ENCODE measurements at regions of chr22 and their contacts with region 1.

Region 1: GRCh38 chr22:42169055-42169469 is 38.5 kb upstream of the CYP2D6 start:
- DNase-seq: peak; percentile 49
- H3K4me3 Mint-ChIP-seq: no peak overlapping the region
- H3K27ac Mint-ChIP-seq: no peak overlapping the region
- H3K4me1 Mint-ChIP-seq: peaks cover 2% of the 10 kb centered on the region
- H3K27me3 Mint-ChIP-seq: no peaks in the 10 kb centered on the region

Region 2: DNA sequence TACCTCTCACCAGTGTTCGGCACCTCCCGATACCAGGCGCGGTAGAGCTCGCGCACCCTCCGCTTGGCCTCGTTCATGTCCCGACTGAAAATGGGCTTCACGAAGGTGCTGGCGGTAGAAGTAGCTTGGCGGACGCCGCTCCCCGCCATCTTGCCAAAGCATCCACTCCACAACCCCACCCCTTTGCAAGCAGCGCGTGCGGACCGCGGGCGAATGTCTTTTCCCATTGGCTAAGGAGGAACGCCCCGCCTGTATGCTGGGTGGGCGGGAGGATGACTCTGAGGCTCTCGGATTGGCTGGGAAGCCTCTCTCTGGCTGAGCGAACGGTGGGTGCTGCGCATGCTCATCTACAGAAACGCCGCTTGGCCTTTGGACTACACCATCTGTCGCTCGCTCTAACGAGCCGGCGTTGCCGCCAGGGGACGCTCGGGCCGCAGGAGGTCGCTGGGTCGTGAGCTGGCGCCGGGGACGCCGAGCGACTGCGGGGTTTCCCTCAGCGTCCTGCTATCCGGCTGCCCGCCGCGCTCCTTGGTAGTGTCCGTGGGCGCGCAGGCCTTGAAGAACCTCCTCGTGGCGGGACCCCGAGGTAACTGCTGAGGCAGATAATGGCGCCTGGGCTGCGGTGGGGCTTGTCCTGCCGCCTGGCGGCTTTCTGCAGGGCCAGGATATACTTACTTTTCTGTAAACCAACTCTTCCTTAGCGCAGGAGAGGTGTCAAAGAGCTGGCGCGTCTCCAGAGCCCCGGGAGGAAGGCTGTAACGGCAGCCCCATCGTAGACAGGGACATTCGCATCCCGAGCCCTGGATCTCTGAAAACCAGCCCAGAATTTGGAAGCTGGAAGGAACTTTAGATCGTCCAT is 78.2 kb before region 1 on chr22 and contains the start of gene NDUFA6:
- intact Hi-C with region 1: no loop called
- DNase-seq: peak; percentile 99
- H3K4me3 Mint-ChIP-seq: peak within 1 kb of the TSS; percentile 98
- H3K27ac Mint-ChIP-seq: peak within 1 kb of the TSS; percentile 100
- H3K4me1 Mint-ChIP-seq: peaks cover 22% of the 10 kb centered on the region
- H3K27me3 Mint-ChIP-seq: no peaks in the 10 kb centered on the region
- total RNA-seq, gene NDUFA6: 92.4 and 95.1 TPM in 2 replicates

Region 3: DNA sequence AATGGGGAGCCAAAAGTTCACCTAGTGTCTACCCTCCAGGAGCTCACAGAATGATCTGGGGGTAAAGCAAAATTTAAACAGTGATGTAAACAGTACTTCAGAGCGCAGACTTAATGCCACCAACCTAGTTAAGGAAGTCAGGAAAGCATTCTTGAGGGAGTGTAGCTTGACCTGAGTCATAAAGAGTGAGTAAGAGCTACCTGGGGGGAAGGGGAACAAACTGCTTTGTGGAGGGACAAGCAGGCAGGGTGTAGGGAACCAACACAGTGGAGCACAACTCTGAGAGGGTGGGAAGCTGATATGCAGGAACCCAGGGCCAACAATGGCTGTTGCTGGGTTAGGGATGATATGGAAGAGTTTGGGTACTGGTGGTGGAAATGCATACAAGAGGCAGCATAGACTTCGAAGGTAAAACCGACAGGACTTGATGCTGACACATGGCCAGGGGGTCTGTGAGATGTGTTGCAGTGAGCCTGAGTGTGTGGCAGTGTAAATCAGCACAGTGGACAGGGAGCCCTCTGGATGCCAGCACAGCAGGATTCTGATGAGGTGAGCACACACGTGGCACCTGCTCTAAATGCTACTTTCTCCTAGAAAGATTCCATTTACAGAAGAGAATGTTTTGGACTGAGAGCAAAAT is 19.9 kb after region 1 on chr22:
- intact Hi-C with region 1: no loop called
- DNase-seq: no peak
- H3K4me3 Mint-ChIP-seq: no peak overlapping the region
- H3K27ac Mint-ChIP-seq: peak overlapping the region; percentile 4
- H3K4me1 Mint-ChIP-seq: peaks cover 45% of the 10 kb centered on the region
- H3K27me3 Mint-ChIP-seq: no peaks in the 10 kb centered on the region

Region 4: GRCh38 chr22:42313804-42314581 is 144.9 kb after region 1 on chr22:
- intact Hi-C with region 1: loop called (anchors 1 kb)
- DNase-seq: peak; percentile 27
- H3K4me3 Mint-ChIP-seq: no peak overlapping the region
- H3K27ac Mint-ChIP-seq: no peak overlapping the region
- H3K4me1 Mint-ChIP-seq: no peaks in the 10 kb centered on the region
- H3K27me3 Mint-ChIP-seq: peaks cover 2% of the 10 kb centered on the region

Region 5: GRCh38 chr22:42437488-42438292 is 268.6 kb after region 1 on chr22:
- intact Hi-C with region 1: loop called (anchors 1 kb)
- DNase-seq: peak; percentile 73
- H3K4me3 Mint-ChIP-seq: peak overlapping the region; percentile 75
- H3K27ac Mint-ChIP-seq: peak overlapping the region; percentile 52
- H3K4me1 Mint-ChIP-seq: peaks cover 22% of the 10 kb centered on the region
- H3K27me3 Mint-ChIP-seq: peaks cover 15% of the 10 kb centered on the region